Activated CD4-positive, alpha-beta memory T cell treated with anti-CD3 and anti-CD28 coated beads, Interleukin-2, amount 10 ng/mL, durations not matched to agents 7 days and 5 days (primary cell): ENCODE measurements at regions of chr12 and their contacts with region 1.

Region 1: DNA sequence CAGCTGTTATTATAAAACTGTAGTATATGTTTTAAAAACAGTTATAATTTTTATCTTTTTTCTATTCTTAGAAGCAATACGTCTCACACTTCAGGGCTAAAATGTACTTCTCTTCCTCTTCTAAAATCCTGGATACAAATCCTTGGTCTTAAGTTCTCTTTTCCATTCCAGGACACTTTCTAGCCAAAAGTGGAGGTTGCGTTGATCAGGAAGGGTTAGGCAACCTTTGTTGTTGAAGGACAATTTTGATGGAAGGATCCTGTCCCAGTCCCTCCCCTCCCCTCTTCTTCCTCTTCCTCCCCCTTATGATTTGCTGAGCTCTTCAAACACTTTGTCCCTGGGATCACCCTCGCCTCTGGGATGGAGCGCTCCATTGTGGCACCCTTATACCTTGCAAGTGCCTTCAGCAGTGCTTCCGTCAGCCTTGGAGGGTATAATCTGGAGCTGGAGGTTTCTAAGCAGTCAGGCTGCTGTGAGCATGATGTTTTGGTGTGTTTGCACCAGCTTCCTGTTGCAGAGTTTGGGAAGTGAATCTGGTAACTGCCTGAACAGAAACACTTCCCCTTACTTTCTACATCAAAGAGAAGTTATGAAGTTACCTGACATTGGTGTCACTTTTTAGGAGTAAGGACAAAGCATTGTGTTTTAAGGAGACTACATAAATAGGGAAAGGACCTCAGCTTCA is 87.4 kb upstream of the SLC38A2 start:
- DNase-seq: peak; percentile 23
- H3K4me3 Mint-ChIP-seq: peak overlapping the region; percentile 60
- H3K27ac Mint-ChIP-seq: peak overlapping the region; percentile 94
- H3K4me1 Mint-ChIP-seq: peaks cover 64% of the 10 kb centered on the region
- H3K27me3 Mint-ChIP-seq: no peaks in the 10 kb centered on the region

Region 2: GRCh38 chr12:46382964-46383653 is 76.9 kb before region 1 on chr12:
- CTCF ChIA-PET with region 1: interaction called, 3 read pairs
- POLR2A ChIA-PET with region 1: interaction called, 12 read pairs
- DNase-seq: peak; percentile 95
- H3K4me3 Mint-ChIP-seq: peak overlapping the region; percentile 82
- H3K27ac Mint-ChIP-seq: peak overlapping the region; percentile 90
- H3K4me1 Mint-ChIP-seq: peaks cover 38% of the 10 kb centered on the region
- H3K27me3 Mint-ChIP-seq: no peaks in the 10 kb centered on the region

Region 3: DNA sequence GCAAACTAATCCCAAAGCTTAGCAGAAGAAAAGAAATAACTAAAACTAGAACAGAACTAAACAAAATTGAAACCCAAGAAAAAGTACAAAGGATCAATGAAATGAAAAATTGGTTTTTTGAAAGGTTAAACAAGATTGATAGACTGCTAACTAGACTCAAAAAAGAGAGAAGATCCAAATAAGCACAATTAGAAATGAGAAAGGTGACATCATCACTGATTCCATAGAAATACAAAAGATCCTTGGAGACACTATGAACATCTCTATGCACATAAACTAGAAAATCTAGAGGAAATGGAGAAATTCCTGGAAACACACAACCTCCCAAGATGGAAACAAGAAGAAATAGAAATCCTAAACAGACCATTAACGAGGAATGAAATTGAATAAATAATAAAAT is 40.3 kb before region 1 on chr12:
- CTCF ChIA-PET with region 1: no interaction called
- POLR2A ChIA-PET with region 1: no interaction called
- DNase-seq: no peak
- H3K4me3 Mint-ChIP-seq: no peak overlapping the region
- H3K27ac Mint-ChIP-seq: no peak overlapping the region
- H3K4me1 Mint-ChIP-seq: no peaks in the 10 kb centered on the region
- H3K27me3 Mint-ChIP-seq: peaks cover 10% of the 10 kb centered on the region

Region 4: DNA sequence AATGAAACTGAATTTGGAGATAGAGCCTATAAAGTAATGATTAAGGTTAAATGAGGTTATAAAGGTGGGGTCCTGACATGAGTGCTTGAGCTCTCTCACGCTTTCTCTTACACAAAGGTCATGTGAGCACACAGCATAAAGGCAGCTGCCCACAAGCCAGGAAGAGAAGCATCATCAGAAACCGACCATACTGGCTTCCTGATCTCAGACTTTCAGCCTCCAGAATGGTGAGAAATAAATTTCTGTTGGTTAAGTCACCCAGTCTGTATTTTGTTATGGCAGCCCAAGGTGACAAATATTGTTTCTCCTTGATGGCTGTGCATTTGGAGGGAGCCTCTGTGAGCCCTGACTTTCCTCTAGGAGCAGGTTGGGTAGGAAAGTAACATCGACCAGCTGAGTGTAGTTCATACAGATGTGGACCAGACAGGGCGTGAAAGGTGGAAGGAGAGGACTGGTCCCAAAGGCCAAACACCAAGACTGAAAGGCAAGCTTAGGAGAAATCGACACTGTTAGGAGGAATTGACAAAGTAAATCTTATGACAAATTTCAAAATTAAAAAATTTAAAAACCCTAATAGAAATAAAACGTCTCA is 10.1 kb after region 1 on chr12:
- CTCF ChIA-PET with region 1: interaction called, 4 read pairs
- POLR2A ChIA-PET with region 1: interaction called, 34 read pairs
- DNase-seq: peak; percentile 56
- H3K4me3 Mint-ChIP-seq: peak overlapping the region; percentile 69
- H3K27ac Mint-ChIP-seq: peak overlapping the region; percentile 72
- H3K4me1 Mint-ChIP-seq: peaks cover 27% of the 10 kb centered on the region
- H3K27me3 Mint-ChIP-seq: no peaks in the 10 kb centered on the region